Vagina (tissue), 2 donors: ENCODE measurements at regions of chr1 and their contacts with region 1.

Region 1: GRCh38 chr1:30379684-30380624 is 343.4 kb downstream of the MATN1 start:
- DNase-seq: no peak
- H3K4me3 ChIP-seq: no peak overlapping the region
- H3K27ac ChIP-seq: peak overlapping the region; percentile 87
- H3K4me1 ChIP-seq: peaks cover 22% of the 10 kb centered on the region
- H3K27me3 ChIP-seq: no peaks in the 10 kb centered on the region
- CTCF ChIP-seq: peak; percentile 39 to 78 (median 43)
- POLR2A ChIP-seq: no peak

Region 2: DNA sequence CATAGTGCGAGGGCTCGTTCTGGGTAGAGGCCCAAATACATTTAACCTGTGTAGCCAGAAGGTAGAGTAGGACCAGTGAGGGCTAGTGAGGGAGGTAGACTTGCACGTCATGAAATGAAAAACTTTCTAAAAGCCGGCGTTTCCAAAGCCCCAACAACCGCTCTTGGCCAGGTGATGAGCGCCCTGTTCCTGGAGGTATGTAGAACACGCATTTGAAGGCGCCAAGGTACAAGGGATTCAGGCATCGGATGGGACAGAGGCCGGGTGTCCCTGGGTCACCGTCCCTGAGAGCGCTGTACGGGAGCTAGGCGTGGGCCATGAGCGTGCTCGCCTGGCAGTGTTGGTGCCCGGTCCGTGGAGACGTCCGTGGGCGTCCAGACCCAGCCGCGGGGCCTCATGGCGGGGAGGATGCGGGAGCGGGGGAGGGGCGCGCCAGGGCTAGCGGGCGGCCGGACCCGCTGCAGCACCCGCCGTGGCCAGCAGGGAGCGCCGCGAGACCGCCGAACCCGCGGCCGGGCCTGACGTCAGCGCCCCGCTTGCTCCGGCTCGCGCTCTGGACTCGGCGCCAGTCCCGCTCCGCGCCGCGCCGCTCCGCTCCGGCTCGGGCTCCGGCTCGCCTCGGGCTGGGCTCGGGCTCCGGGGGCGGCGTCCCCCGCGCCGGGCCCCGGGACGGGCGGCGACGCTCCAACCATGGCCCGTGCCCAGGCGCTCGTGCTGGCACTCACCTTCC is 1143.8 kb before region 1 on chr1 and contains the start of gene PTPRU:
- intact Hi-C with region 1: loop called (anchors 2 kb)
- DNase-seq: no peak
- H3K4me3 ChIP-seq: peak within 1 kb of the TSS; percentile 78 to 83
- H3K27ac ChIP-seq: peak within 1 kb of the TSS; percentile 84
- H3K4me1 ChIP-seq: peaks cover 24% of the 10 kb centered on the region
- H3K27me3 ChIP-seq: no peaks in the 10 kb centered on the region
- CTCF ChIP-seq: peak; percentile 82 to 85 (median 85)
- POLR2A ChIP-seq: peak in 1 of 2 donors; percentile 59
- total RNA-seq, gene PTPRU: 37.3 TPM

Region 3: DNA sequence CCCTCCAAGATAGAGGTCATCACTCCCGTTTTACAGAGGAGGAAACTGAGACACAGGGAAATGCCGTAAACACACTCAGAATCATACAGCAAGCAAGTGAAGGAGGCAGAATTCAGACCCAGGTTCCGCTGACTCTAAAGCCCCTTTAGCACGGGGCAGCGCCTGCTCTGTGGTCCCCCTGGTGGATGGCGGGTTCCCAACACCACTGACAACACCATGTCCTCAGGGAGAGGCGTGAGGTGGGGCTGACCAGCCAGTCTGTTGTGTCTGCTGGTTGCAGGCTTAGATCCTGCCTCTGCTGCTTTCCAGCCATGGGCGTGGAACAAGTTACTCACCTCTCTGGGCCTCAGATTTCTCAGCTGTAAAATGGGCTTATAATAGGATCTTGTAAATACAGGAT is 273.8 kb before region 1 on chr1:
- intact Hi-C with region 1: no loop called
- DNase-seq: no peak
- H3K4me3 ChIP-seq: no peak overlapping the region
- H3K27ac ChIP-seq: no peak overlapping the region
- H3K4me1 ChIP-seq: no peaks in the 10 kb centered on the region
- H3K27me3 ChIP-seq: no peaks in the 10 kb centered on the region
- CTCF ChIP-seq: peak in 1 of 3 experiments; percentile 11
- POLR2A ChIP-seq: no peak

Region 4: DNA sequence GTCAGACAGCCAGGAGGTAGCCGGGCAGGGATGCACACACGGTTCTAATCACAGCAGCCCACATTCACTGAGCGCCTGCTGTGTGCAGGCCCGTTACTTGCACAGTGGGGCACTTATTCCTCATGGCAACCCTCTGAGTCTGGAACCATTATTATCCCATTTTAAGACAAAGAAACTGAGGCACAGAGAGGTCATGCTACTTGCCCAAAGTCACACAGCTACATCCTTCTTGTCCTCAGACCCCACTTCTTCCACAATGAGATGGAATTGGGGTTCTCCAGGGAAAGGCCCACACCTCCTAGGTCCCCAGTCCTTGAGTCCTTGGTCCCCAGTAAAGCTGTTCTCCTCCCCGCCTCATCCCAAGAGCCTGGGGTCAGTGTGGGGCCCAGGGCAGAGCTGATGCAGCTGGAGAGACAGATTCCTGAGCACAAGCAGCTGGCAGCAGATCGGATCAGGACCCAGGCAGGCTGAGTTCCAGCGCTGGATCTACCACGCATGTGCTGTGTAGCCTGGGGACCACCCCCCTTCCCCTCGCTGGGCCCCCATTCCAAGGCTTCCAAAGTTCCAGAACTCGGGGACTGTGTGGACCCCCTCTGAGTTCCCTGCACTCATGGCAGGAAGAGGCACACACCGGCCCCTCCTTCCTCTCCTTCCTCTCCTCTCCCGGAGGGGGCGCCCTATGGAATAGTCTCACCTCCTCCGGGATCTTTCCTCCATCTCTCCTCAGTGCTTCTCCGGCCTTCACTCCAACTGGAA is 50.0 kb before region 1 on chr1:
- intact Hi-C with region 1: no loop called
- DNase-seq: peak in 1 of 2 donors; percentile 43
- H3K4me3 ChIP-seq: no peak overlapping the region
- H3K27ac ChIP-seq: no peak overlapping the region
- H3K4me1 ChIP-seq: no peaks in the 10 kb centered on the region
- H3K27me3 ChIP-seq: no peaks in the 10 kb centered on the region
- CTCF ChIP-seq: no peak
- POLR2A ChIP-seq: no peak

Region 5: DNA sequence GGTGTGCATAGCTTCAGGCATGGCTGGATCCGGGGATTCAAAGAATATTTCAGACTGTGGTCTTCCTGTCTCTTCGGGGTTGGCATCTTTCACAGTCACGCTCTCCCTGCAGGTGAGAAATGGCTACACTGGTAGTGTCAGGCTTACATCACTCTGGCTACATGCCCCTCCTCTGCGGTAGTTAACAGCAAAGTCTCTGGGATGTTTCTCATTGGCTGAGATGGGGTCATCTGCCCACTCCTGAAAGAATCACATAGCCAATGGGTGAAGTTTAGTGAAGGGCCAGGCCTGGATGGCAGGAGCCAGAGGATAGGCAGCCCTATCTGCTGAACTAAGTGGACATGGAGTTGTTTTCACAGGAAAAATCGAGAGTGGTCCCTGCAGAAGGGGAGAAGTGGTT is 13.0 kb before region 1 on chr1:
- intact Hi-C with region 1: loop called (anchors 1 kb)
- DNase-seq: peak in 1 of 2 donors; percentile 43
- H3K4me3 ChIP-seq: no peak overlapping the region
- H3K27ac ChIP-seq: no peak overlapping the region
- H3K4me1 ChIP-seq: no peaks in the 10 kb centered on the region
- H3K27me3 ChIP-seq: no peaks in the 10 kb centered on the region
- CTCF ChIP-seq: no peak
- POLR2A ChIP-seq: no peak